ENCODE measurements at regions of chr11 and their contacts with region 1.

Region 1: DNA sequence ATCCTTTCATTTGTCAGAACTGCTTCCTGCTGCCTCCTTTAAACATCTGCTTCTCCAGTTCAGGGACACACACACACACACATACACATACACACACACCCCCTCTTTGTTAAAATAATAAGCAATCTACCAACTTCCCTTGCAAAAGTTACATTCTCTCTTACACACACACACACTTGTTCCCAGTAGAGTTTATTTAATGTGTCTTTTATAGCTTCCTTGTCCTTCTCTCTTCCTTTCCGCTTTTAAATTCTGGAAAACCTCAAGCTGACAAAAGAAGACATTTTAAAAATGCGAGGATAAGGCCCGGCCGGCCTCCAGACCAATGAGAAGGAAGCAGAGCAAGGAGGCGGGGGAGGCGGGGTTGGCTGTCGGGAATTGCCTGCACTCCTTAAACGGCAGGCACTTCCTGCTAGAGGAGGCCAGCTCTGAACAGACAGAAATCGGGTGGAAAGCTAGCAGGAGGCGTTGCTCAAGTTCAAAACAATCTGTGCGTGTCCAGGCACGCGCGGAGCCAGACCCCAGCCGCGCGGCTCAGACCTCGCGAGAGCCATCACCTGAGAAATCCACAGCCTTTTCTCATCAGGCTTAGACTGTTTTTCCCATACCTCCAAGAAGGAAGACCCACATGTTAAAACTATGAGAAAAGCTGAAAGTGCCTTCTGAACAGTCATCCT is 99.9 kb downstream of the MAML2 start:
- DNase-seq: peak; percentile 99
- H3K4me3 ChIP-seq: peak overlapping the region; percentile 38
- H3K4me3 Mint-ChIP-seq: peak overlapping the region; percentile 74
- H3K27ac Mint-ChIP-seq: peak overlapping the region; percentile 88
- H3K4me1 ChIP-seq: peaks cover 38% of the 10 kb centered on the region
- H3K4me1 Mint-ChIP-seq: peaks cover 21% of the 10 kb centered on the region
- H3K27me3 ChIP-seq: no peaks in the 10 kb centered on the region
- H3K27me3 Mint-ChIP-seq: no peaks in the 10 kb centered on the region
- CTCF ChIP-seq: no peak

Region 2: GRCh38 chr11:95849087-95849825 is 393.9 kb before region 1 on chr11:
- CTCF ChIA-PET with region 1: interaction called, 13 read pairs
- POLR2A ChIA-PET with region 1: no interaction called
- intact Hi-C with region 1: loop called (anchors 1 kb)
- DNase-seq: peak; percentile 75 to 81
- H3K4me3 ChIP-seq: no peak overlapping the region
- H3K4me3 Mint-ChIP-seq: no peak overlapping the region
- H3K27ac Mint-ChIP-seq: no peak overlapping the region
- H3K4me1 ChIP-seq: no peaks in the 10 kb centered on the region
- H3K4me1 Mint-ChIP-seq: no peaks in the 10 kb centered on the region
- H3K27me3 ChIP-seq: no peaks in the 10 kb centered on the region
- H3K27me3 Mint-ChIP-seq: no peaks in the 10 kb centered on the region
- CTCF ChIP-seq: peak; percentile 71 to 85

Region 3: GRCh38 chr11:96012086-96012824 is 230.9 kb before region 1 on chr11:
- CTCF ChIA-PET with region 1: no interaction called
- POLR2A ChIA-PET with region 1: no interaction called
- intact Hi-C with region 1: loop called (anchors 1 kb)
- DNase-seq: peak; percentile 62 to 69
- H3K4me3 ChIP-seq: no peak overlapping the region
- H3K4me3 Mint-ChIP-seq: no peak overlapping the region
- H3K27ac Mint-ChIP-seq: no peak overlapping the region
- H3K4me1 ChIP-seq: peaks cover 32% of the 10 kb centered on the region
- H3K4me1 Mint-ChIP-seq: peaks cover 14% of the 10 kb centered on the region
- H3K27me3 ChIP-seq: no peaks in the 10 kb centered on the region
- H3K27me3 Mint-ChIP-seq: no peaks in the 10 kb centered on the region
- CTCF ChIP-seq: peak; percentile 38 to 70

Region 4: GRCh38 chr11:96091476-96091875 is 151.6 kb before region 1 on chr11:
- CTCF ChIA-PET with region 1: no interaction called
- POLR2A ChIA-PET with region 1: interaction called, 3 read pairs
- intact Hi-C with region 1: loop called (anchors 1 kb)
- DNase-seq: no peak
- H3K4me3 ChIP-seq: no peak overlapping the region
- H3K4me3 Mint-ChIP-seq: no peak overlapping the region
- H3K27ac Mint-ChIP-seq: peak overlapping the region; percentile 94
- H3K4me1 ChIP-seq: peaks cover 45% of the 10 kb centered on the region
- H3K4me1 Mint-ChIP-seq: peaks cover 59% of the 10 kb centered on the region
- H3K27me3 ChIP-seq: no peaks in the 10 kb centered on the region
- H3K27me3 Mint-ChIP-seq: no peaks in the 10 kb centered on the region
- CTCF ChIP-seq: peak; percentile 12 to 25

Region 5: GRCh38 chr11:96199563-96200025 is 43.5 kb before region 1 on chr11:
- CTCF ChIA-PET with region 1: no interaction called
- POLR2A ChIA-PET with region 1: interaction called, 6 read pairs
- intact Hi-C with region 1: loop called (anchors 1 kb)
- DNase-seq: no peak
- H3K4me3 ChIP-seq: no peak overlapping the region
- H3K4me3 Mint-ChIP-seq: no peak overlapping the region
- H3K27ac Mint-ChIP-seq: peak overlapping the region; percentile 90
- H3K4me1 ChIP-seq: peaks cover 30% of the 10 kb centered on the region
- H3K4me1 Mint-ChIP-seq: peaks cover 31% of the 10 kb centered on the region
- H3K27me3 ChIP-seq: no peaks in the 10 kb centered on the region
- H3K27me3 Mint-ChIP-seq: no peaks in the 10 kb centered on the region
- CTCF ChIP-seq: no peak

Region 6: GRCh38 chr11:96324960-96325359 is 81.9 kb after region 1 on chr11:
- CTCF ChIA-PET with region 1: no interaction called
- POLR2A ChIA-PET with region 1: interaction called, 4 read pairs
- intact Hi-C with region 1: loop called (anchors 1 kb)
- DNase-seq: peak in 1 of 2 experiments; percentile 52
- H3K4me3 ChIP-seq: no peak overlapping the region
- H3K4me3 Mint-ChIP-seq: peak overlapping the region; percentile 3
- H3K27ac Mint-ChIP-seq: peak overlapping the region; percentile 97
- H3K4me1 ChIP-seq: peaks cover 82% of the 10 kb centered on the region
- H3K4me1 Mint-ChIP-seq: peaks cover 65% of the 10 kb centered on the region
- H3K27me3 ChIP-seq: no peaks in the 10 kb centered on the region
- H3K27me3 Mint-ChIP-seq: no peaks in the 10 kb centered on the region
- CTCF ChIP-seq: no peak

Measured in Caco-2 (cell line).